AG04449 (cell line): ENCODE measurements at regions of chr5 and their contacts with region 1.

Region 1: GRCh38 chr5:115586601-115587048 is 15.7 kb downstream of the TICAM2 start:
- DNase-seq: no peak
- H3K4me3 ChIP-seq: no peak overlapping the region
- CTCF ChIP-seq: no peak

Region 2: DNA sequence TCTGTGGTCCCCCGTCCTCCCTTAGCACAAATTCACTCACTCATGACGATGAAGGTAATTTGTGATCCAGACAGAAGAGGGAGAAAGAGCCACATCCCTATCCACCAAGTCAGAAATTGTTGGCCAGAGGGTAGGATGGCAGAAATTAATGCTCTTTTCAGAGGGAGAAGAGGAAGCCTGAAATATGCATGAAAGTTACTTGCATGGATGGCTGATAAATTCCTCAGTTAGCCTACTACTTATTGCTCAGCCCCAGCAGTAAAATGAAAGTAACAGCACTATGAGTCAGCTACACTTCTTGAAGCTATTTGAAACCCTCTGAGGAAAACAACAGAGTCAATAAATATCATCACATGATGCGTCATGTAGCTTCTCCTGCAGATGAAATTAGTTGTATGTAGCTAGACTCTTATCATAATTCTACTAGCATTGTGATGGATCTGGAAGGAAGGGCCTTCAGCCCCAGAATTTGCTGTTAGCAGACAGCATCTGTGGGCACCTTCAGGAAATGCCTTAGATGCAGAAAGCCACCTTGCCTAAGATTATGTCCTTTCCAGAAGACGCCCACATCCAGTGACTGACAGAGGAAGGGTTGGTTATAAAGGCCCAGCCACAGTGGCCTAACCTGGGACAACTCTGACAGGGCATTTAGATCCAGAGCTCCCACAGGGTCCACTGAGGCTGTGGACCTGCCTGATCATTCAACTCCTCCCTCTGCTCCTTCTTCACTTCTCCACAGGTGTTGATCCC is 209.0 kb before region 1 on chr5:
- CTCF ChIA-PET with region 1: interaction called, 19 read pairs
- POLR2A ChIA-PET with region 1: no interaction called
- DNase-seq: peak; percentile 93
- H3K4me3 ChIP-seq: peak overlapping the region; percentile 16
- CTCF ChIP-seq: peak; percentile 53

Region 3: DNA sequence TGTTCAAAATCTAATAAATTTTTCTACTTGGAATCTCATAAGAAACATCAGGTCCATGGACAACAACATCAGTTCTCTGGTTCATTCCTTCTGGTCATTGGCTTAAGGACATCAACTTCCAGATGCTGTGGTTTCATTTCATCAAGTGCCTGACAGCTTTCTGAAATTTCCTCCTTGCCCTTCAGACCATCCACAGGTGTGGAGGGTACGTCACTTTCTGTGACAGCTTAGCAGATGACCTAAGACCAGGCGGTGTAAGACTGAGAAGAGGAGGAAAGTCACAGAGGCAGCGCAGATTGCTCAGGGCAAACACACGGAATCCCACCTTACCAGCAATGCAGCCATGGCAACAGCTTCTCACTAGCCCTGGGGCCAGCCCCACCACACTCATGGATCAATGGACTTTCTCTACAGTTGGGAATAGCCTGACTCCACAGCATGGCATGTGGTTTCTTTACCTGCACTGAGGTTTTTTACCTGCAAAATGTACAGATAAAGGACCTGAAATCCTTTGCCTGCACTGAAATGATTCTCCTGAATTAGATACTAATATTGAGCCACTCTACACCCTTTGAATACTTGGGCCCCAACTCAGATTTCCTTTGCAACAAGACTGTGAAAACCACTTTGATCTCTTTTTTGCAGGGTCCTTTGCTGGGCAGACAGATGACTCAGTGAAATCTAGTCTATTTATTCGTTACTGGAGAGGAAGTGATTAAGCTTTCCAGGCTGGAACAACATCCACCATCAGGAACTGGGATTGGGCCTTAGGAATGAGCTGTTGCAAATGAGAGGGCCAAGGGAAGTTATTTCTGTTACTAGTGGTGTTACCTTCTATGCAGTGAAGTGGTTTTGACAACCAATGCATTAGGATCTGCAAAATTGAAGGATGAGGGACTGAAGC is 11.2 kb before region 1 on chr5:
- CTCF ChIA-PET with region 1: interaction called, 36 read pairs
- POLR2A ChIA-PET with region 1: interaction called, 3 read pairs
- DNase-seq: no peak
- H3K4me3 ChIP-seq: no peak overlapping the region
- CTCF ChIP-seq: no peak

Region 4: GRCh38 chr5:115601701-115602590 is 15.3 kb after region 1 on chr5 and contains the start of gene TICAM2:
- CTCF ChIA-PET with region 1: interaction called, 16 read pairs
- POLR2A ChIA-PET with region 1: no interaction called
- DNase-seq: no peak
- H3K4me3 ChIP-seq: peak within 1 kb of the TSS; percentile 71
- CTCF ChIP-seq: peak; percentile 31